SK-N-SH (cell line): ENCODE measurements at regions of chr5 and their contacts with region 1.

Region 1: GRCh38 chr5:78648359-78649210 is at the start of gene LHFPL2:
- DNase-seq: peak; percentile 95
- H3K4me3 ChIP-seq: peak within 1 kb of the TSS; percentile 89 to 90
- H3K27ac ChIP-seq: peak within 1 kb of the TSS; percentile 92 to 93
- H3K4me1 ChIP-seq: peaks cover 11 to 26% of the 10 kb centered on the region in 2 experiments
- H3K27me3 ChIP-seq: no peaks in the 10 kb centered on the region
- CTCF ChIP-seq: no peak
- EP300 ChIP-seq: no peak
- RAD21 ChIP-seq: peak; percentile 14; the same call in 1 of the 2 replicates
- polyA plus RNA-seq, gene LHFPL2: 8.6 and 10.4 TPM in 2 replicates

Region 2: GRCh38 chr5:78562714-78563330 is 85.8 kb before region 1 on chr5:
- CTCF ChIA-PET with region 1: no interaction called
- POLR2A ChIA-PET with region 1: no interaction called
- DNase-seq: no peak
- H3K4me3 ChIP-seq: no peak overlapping the region
- H3K27ac ChIP-seq: peak overlapping the region in 1 of 2 experiments; percentile 71; a peak in 2 of 4 replicates
- H3K4me1 ChIP-seq: peaks cover 15 to 19% of the 10 kb centered on the region in 2 experiments
- H3K27me3 ChIP-seq: no peaks in the 10 kb centered on the region
- CTCF ChIP-seq: no peak
- EP300 ChIP-seq: no peak
- RAD21 ChIP-seq: no peak

Region 3: DNA sequence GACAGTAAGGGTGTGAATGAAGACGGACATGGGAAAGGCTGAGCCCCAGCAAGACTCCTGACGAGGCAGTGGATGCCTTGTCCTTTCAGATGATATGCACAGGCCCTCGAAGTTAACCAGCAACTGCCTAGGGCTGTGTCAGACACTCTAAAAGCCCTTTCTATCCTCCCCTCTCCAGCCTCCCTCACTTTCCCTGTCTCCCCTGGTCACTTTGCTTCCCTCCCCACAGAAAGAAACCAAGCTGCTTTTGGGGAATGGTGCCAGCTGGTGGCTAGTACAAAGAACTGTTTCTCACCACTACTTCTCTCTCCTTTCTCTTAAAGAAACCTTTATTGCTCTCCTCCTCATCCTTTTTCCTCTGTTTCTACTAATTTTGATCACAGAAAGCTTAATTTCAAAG is 21.4 kb before region 1 on chr5:
- CTCF ChIA-PET with region 1: interaction called, 36 read pairs
- POLR2A ChIA-PET with region 1: interaction called, 4 read pairs
- DNase-seq: no peak
- H3K4me3 ChIP-seq: no peak overlapping the region
- H3K27ac ChIP-seq: peak overlapping the region; percentile 35 to 56; a peak in 3 of 4 replicates
- H3K4me1 ChIP-seq: peaks cover 23 to 42% of the 10 kb centered on the region in 2 experiments
- H3K27me3 ChIP-seq: no peaks in the 10 kb centered on the region
- CTCF ChIP-seq: peak; percentile 49
- EP300 ChIP-seq: no peak
- RAD21 ChIP-seq: peak; percentile 68

Region 4: GRCh38 chr5:78638423-78638822 is 10.2 kb before region 1 on chr5:
- CTCF ChIA-PET with region 1: interaction called, 36 read pairs
- POLR2A ChIA-PET with region 1: no interaction called
- DNase-seq: peak; percentile 64
- H3K4me3 ChIP-seq: no peak overlapping the region
- H3K27ac ChIP-seq: peak overlapping the region; percentile 74 to 92
- H3K4me1 ChIP-seq: peaks cover 45 to 52% of the 10 kb centered on the region in 2 experiments
- H3K27me3 ChIP-seq: no peaks in the 10 kb centered on the region
- CTCF ChIP-seq: no peak
- EP300 ChIP-seq: peak; percentile 41 to 80; a peak in 2 of 4 replicates
- RAD21 ChIP-seq: no peak